B cell (primary cell): ENCODE measurements at regions of chr17 and their contacts with region 1.

Region 1: GRCh38 chr17:34361478-34362061 is 1.5 kb downstream of the CCL1 start:
- DNase-seq: peak; percentile 83
- ATAC-seq: peak; percentile 77
- H3K4me3 ChIP-seq: no peak overlapping the region
- H3K4me3 Mint-ChIP-seq: no peak overlapping the region
- H3K27ac ChIP-seq: no peak overlapping the region
- H3K27ac Mint-ChIP-seq: no peak overlapping the region
- H3K4me1 ChIP-seq: peaks cover 6 to 10% of the 10 kb centered on the region in 2 donors
- H3K4me1 Mint-ChIP-seq: peaks cover 10% of the 10 kb centered on the region
- H3K27me3 ChIP-seq: peaks cover 0 to 20% (median 4%) of the 10 kb centered on the region in 4 experiments
- H3K27me3 Mint-ChIP-seq: peaks cover 34% of the 10 kb centered on the region
- CTCF ChIP-seq: peak; percentile 91

Region 2: GRCh38 chr17:34171245-34171818 is 190.2 kb before region 1 on chr17:
- CTCF ChIA-PET with region 1: interaction called, 34 read pairs
- POLR2A ChIA-PET with region 1: no interaction called
- intact Hi-C with region 1: no loop called
- DNase-seq: peak; percentile 59
- ATAC-seq: peak; percentile 43
- H3K4me3 ChIP-seq: no peak overlapping the region
- H3K4me3 Mint-ChIP-seq: no peak overlapping the region
- H3K27ac ChIP-seq: no peak overlapping the region
- H3K27ac Mint-ChIP-seq: no peak overlapping the region
- H3K4me1 ChIP-seq: no peaks in the 10 kb centered on the region
- H3K4me1 Mint-ChIP-seq: no peaks in the 10 kb centered on the region
- H3K27me3 ChIP-seq: peaks cover 0 to 6% (median 1%) of the 10 kb centered on the region in 4 experiments
- H3K27me3 Mint-ChIP-seq: peaks cover 26% of the 10 kb centered on the region
- CTCF ChIP-seq: peak; percentile 98

Region 3: GRCh38 chr17:34199932-34200534 is 161.5 kb before region 1 on chr17:
- CTCF ChIA-PET with region 1: interaction called, 253 read pairs
- POLR2A ChIA-PET with region 1: no interaction called
- intact Hi-C with region 1: no loop called
- DNase-seq: peak; percentile 85
- ATAC-seq: peak; percentile 94
- H3K4me3 ChIP-seq: no peak overlapping the region
- H3K4me3 Mint-ChIP-seq: no peak overlapping the region
- H3K27ac ChIP-seq: no peak overlapping the region
- H3K27ac Mint-ChIP-seq: no peak overlapping the region
- H3K4me1 ChIP-seq: no peaks in the 10 kb centered on the region
- H3K4me1 Mint-ChIP-seq: no peaks in the 10 kb centered on the region
- H3K27me3 ChIP-seq: peaks cover 0 to 12% (median 6%) of the 10 kb centered on the region in 4 experiments
- H3K27me3 Mint-ChIP-seq: peaks cover 56% of the 10 kb centered on the region
- CTCF ChIP-seq: peak; percentile 100

Region 4: DNA sequence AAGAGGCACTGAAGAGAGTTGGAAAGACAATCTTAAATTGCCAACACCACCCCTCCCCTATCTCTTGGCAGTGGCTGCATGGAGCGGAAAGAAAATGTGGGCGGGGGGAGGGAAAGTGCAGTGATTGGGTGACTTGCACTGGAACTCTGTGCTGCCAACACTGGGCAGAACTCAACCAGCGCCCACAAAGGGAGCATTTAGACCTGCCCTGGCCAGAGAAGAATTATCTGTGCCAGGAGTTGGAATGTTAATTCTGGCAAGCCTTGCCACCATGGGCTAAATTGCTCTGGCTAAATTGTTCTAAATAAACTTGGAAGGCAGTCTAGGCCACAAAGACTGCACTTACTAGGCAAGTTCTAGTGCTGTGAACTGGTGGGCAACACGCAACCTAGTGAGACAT is 11.8 kb before region 1 on chr17:
- CTCF ChIA-PET with region 1: interaction called, 16 read pairs
- POLR2A ChIA-PET with region 1: no interaction called
- intact Hi-C with region 1: no loop called
- DNase-seq: no peak
- ATAC-seq: no peak
- H3K4me3 ChIP-seq: no peak overlapping the region
- H3K4me3 Mint-ChIP-seq: no peak overlapping the region
- H3K27ac ChIP-seq: no peak overlapping the region
- H3K27ac Mint-ChIP-seq: no peak overlapping the region
- H3K4me1 ChIP-seq: no peaks in the 10 kb centered on the region
- H3K4me1 Mint-ChIP-seq: no peaks in the 10 kb centered on the region
- H3K27me3 ChIP-seq: peaks cover 0 to 7% (median 3%) of the 10 kb centered on the region in 4 experiments
- H3K27me3 Mint-ChIP-seq: peaks cover 45% of the 10 kb centered on the region
- CTCF ChIP-seq: no peak

Region 5: GRCh38 chr17:34378664-34379101 is 17.1 kb after region 1 on chr17:
- CTCF ChIA-PET with region 1: interaction called, 27 read pairs
- POLR2A ChIA-PET with region 1: no interaction called
- intact Hi-C with region 1: no loop called
- DNase-seq: peak; percentile 73
- ATAC-seq: peak; percentile 77
- H3K4me3 ChIP-seq: peak overlapping the region in 1 of 5 experiments; percentile 24
- H3K4me3 Mint-ChIP-seq: peak overlapping the region; percentile 43
- H3K27ac ChIP-seq: peak overlapping the region in 1 of 2 donors; percentile 20
- H3K27ac Mint-ChIP-seq: peak overlapping the region; percentile 78
- H3K4me1 ChIP-seq: peaks cover 10 to 25% of the 10 kb centered on the region in 2 donors
- H3K4me1 Mint-ChIP-seq: peaks cover 36% of the 10 kb centered on the region
- H3K27me3 ChIP-seq: no peaks in the 10 kb centered on the region
- H3K27me3 Mint-ChIP-seq: peaks cover 3% of the 10 kb centered on the region
- CTCF ChIP-seq: peak; percentile 36